Psoas muscle (tissue), 8 donors: ENCODE measurements at regions of chr9 and their contacts with region 1.

Region 1: DNA sequence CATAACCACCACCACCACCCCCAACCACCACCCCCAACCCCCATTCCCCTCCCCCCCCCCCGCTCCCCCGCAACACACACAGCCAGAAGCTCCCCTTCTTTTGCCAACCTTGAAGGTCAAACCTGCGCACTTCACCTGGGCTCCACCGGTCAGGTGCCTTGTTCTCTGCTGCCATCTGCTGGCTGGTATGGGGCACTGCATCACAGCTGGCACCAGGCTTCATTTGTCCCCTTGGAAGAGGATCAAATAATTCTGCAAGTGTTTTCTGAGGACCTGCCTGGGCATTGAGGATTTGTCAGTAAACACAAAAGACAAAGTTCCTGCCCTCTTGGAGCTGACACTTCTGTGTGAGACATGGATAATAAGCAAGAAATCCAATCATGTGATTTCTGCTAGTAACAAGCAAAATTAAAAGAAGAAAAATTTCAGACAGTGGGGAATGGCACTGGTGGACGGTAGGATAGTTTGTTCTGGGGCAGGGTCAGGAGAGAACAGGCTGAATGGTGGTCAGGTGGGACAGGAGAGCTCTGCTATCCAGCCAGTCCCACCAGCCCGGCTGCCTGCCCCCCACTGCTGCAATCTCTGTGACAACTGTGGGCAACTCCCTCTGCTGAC is 55.6 kb upstream of the LMX1B start:
- DNase-seq: peak; percentile 49 to 73
- ATAC-seq: peak; percentile 72 to 85 (median 84)
- H3K4me3 ChIP-seq: no peak overlapping the region
- H3K27ac ChIP-seq: no peak overlapping the region
- H3K4me1 ChIP-seq: no peaks in the 10 kb centered on the region
- H3K27me3 ChIP-seq: peaks cover 0 to 13% (median 0%) of the 10 kb centered on the region in 3 donors
- CTCF ChIP-seq: peak; percentile 87

Region 2: GRCh38 chr9:126386088-126386487 is 172.1 kb before region 1 on chr9:
- intact Hi-C with region 1: no loop called
- DNase-seq: no peak
- ATAC-seq: peak in 2 of 4 donors; percentile 51 to 53
- H3K4me3 ChIP-seq: no peak overlapping the region
- H3K27ac ChIP-seq: no peak overlapping the region
- H3K4me1 ChIP-seq: peaks cover 3% of the 10 kb centered on the region
- H3K27me3 ChIP-seq: no peaks in the 10 kb centered on the region
- CTCF ChIP-seq: peak; percentile 27

Region 3: GRCh38 chr9:126500684-126501382 is 57.3 kb before region 1 on chr9:
- intact Hi-C with region 1: loop called (anchors 1 to 5 kb)
- DNase-seq: peak; percentile 75 to 86
- ATAC-seq: peak; percentile 76 to 86 (median 78)
- H3K4me3 ChIP-seq: no peak overlapping the region
- H3K27ac ChIP-seq: no peak overlapping the region
- H3K4me1 ChIP-seq: no peaks in the 10 kb centered on the region
- H3K27me3 ChIP-seq: no peaks in the 10 kb centered on the region
- CTCF ChIP-seq: peak; percentile 96

Region 4: DNA sequence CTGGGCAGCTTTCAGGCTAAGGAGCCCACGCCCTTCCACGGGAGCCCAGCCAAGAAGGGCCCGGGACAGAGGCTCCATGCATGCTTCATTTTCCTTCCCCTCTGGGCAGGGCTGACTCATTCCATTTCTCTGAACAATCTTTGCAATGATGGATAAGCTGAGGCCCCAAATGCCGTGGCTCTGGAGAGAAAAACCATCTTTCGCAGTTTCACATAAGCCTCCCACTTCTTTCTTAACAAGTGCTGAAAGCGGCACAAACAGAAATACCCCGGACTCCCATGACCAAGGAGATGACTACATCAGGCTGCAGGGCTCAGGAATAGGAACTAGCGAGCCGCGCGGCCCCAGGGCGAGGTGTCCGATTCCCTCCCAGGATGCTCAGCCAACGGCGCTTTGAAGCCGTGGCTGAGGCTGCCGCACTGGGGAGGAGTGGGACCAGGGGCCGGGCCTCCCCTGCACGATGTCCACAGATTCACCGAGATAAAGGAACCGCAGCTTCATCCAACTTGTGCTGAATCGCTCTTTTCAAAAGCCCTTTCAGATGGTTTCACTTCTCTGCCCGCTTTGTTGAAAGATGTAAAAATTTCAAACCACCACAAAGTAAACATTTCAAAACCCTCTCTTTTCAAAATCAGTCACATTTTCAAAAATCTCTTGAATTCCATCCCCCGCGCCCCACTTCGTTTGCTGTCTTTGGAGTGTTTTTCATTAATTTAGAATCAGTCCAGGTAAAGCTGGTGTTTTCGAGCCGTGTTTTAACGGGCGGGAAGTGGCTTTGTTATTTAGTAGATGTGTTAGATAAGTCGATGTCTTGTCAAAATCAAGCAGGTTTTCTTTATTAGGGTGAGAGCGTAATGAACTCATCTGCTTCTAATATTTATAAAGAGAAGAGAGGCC is 41.0 kb before region 1 on chr9:
- intact Hi-C with region 1: no loop called
- DNase-seq: peak; percentile 71 to 73
- ATAC-seq: peak; percentile 44 to 60 (median 54)
- H3K4me3 ChIP-seq: peak overlapping the region; percentile 42
- H3K27ac ChIP-seq: no peak overlapping the region
- H3K4me1 ChIP-seq: peaks cover 10% of the 10 kb centered on the region
- H3K27me3 ChIP-seq: peaks cover 0 to 73% (median 25%) of the 10 kb centered on the region in 3 donors
- CTCF ChIP-seq: no peak